Heart left ventricle (tissue), 16 donors: ENCODE measurements at regions of chr2 and their contacts with region 1.

Region 1: DNA sequence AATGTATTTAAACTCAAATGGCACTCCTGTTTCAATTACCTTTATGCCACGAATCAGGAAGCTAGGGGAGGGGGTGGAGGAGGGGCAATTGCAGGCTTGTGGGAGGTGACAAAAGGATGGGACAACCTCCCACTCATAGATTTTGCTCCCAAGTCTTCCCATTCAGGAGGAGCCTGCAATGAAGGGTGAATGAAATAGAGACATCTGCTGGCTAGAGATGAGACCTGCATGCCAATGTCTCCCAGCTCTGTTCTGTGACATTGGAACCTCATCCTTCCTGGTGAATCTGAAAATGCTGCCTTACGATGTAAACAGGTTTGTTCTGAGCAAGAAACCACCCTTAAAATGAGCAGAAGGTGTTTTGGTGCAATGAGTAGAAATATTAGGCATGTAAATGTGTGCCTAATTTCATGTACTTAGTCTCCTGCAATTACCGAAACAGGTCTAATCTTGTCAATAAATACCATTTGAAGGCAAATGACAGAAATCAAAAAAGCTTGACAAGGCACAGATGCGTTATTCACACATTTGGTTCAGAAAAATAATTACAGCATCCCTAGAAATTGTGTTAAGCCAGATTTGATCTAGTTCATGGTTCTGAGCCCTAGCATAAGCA is 2.7 kb upstream of the PID1 start:
- DNase-seq: peak in 3 of 5 donors; percentile 37 to 49 (median 40)
- ATAC-seq: peak; percentile 53 to 85 (median 82)
- H3K4me3 ChIP-seq: peak overlapping the region in 8 of 12 donors; percentile 21 to 45 (median 39)
- H3K27ac ChIP-seq: no peak overlapping the region
- H3K4me1 ChIP-seq: peaks cover 0 to 13% (median 0%) of the 10 kb centered on the region in 12 donors
- H3K27me3 ChIP-seq: peaks cover 0 to 5% (median 0%) of the 10 kb centered on the region in 9 donors
- CTCF ChIP-seq: peak; percentile 58 to 85 (median 72)
- POLR2A ChIP-seq: no peak

Region 2: GRCh38 chr2:227890495-227891079 is 1383.2 kb before region 1 on chr2:
- intact Hi-C with region 1: loop called in 4 of 10 experiments (anchors 2 to 10 kb)
- DNase-seq: no peak
- ATAC-seq: peak in 2 of 4 donors; percentile 66 to 79
- H3K4me3 ChIP-seq: no peak overlapping the region
- H3K27ac ChIP-seq: no peak overlapping the region
- H3K4me1 ChIP-seq: no peaks in the 10 kb centered on the region
- H3K27me3 ChIP-seq: no peaks in the 10 kb centered on the region
- CTCF ChIP-seq: peak; percentile 46 to 75 (median 68)
- POLR2A ChIP-seq: no peak

Region 3: GRCh38 chr2:228613133-228613850 is 660.5 kb before region 1 on chr2:
- intact Hi-C with region 1: no loop called
- DNase-seq: no peak
- ATAC-seq: no peak
- H3K4me3 ChIP-seq: no peak overlapping the region
- H3K27ac ChIP-seq: no peak overlapping the region
- H3K4me1 ChIP-seq: no peaks in the 10 kb centered on the region
- H3K27me3 ChIP-seq: no peaks in the 10 kb centered on the region
- CTCF ChIP-seq: no peak
- POLR2A ChIP-seq: no peak

Region 4: DNA sequence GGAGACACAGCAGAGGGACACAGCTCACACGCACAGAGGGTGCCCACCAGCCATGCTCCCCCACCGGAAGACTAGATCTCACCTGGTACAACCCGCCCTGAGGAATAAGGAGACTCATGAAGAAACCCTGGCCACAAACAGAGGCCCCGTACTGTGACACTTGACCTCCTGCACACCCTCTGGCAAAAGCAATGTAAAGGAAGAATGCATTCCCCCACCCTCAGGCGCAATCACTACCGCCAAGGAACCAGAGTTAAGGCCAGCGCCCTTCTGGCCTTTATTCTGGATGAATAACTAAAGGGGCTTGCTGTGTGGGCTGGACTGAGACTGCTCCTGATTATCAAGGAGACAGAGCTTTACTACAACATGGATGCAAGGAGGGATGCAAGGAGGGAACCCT is 583.1 kb before region 1 on chr2:
- intact Hi-C with region 1: loop called in 4 of 10 experiments (anchors 5 kb)
- DNase-seq: no peak
- ATAC-seq: no peak
- H3K4me3 ChIP-seq: no peak overlapping the region
- H3K27ac ChIP-seq: no peak overlapping the region
- H3K4me1 ChIP-seq: no peaks in the 10 kb centered on the region
- H3K27me3 ChIP-seq: no peaks in the 10 kb centered on the region
- CTCF ChIP-seq: no peak
- POLR2A ChIP-seq: no peak

Region 5: DNA sequence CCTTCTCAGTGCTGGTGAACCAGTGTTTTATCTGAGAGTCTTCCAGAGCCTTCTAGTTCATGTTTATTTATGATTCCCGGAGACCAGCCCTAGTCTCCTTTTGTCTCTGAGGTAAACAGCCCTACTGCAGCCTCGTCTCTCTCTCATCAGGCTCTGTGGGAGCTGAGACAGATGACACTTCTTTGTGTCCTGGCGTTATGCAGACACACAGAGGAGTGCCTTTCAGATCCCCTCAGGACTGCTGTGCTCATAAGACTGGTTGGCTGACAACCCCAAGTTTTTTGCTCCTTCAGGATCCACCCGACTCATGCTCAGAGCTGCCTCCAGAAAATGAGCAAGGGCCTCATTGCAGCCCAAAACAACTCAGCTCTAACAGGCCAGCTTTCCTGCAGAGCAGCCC is 568.5 kb before region 1 on chr2:
- intact Hi-C with region 1: loop called in 4 of 10 experiments (anchors 5 kb)
- DNase-seq: no peak
- ATAC-seq: no peak
- H3K4me3 ChIP-seq: no peak overlapping the region
- H3K27ac ChIP-seq: no peak overlapping the region
- H3K4me1 ChIP-seq: no peaks in the 10 kb centered on the region
- H3K27me3 ChIP-seq: no peaks in the 10 kb centered on the region
- CTCF ChIP-seq: no peak
- POLR2A ChIP-seq: no peak

Region 6: DNA sequence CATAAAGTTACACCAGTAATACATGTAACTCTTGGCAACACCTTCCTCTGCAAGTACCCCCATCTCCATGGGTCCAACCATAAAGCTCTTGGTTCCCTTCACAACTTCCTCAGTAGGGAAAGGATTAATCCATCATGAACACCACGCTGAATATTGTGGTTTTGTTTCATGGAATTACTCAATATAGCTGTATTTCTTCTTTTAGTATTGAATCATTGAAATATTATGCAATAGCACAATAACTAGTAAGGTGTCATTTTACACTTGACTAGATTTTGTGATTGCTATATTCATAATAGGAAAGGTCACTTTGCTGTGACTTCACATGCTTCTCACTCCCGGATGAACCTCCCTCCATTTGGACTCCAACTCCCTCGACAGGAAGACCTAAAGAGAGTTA is 27.0 kb after region 1 on chr2:
- intact Hi-C with region 1: no loop called
- DNase-seq: no peak
- ATAC-seq: peak in 3 of 4 donors; percentile 30 to 66 (median 42)
- H3K4me3 ChIP-seq: no peak overlapping the region
- H3K27ac ChIP-seq: peak overlapping the region in 2 of 12 donors; percentile 22 to 78
- H3K4me1 ChIP-seq: peaks cover 0 to 34% (median 0%) of the 10 kb centered on the region in 12 donors
- H3K27me3 ChIP-seq: no peaks in the 10 kb centered on the region
- CTCF ChIP-seq: no peak
- POLR2A ChIP-seq: no peak

Region 7: DNA sequence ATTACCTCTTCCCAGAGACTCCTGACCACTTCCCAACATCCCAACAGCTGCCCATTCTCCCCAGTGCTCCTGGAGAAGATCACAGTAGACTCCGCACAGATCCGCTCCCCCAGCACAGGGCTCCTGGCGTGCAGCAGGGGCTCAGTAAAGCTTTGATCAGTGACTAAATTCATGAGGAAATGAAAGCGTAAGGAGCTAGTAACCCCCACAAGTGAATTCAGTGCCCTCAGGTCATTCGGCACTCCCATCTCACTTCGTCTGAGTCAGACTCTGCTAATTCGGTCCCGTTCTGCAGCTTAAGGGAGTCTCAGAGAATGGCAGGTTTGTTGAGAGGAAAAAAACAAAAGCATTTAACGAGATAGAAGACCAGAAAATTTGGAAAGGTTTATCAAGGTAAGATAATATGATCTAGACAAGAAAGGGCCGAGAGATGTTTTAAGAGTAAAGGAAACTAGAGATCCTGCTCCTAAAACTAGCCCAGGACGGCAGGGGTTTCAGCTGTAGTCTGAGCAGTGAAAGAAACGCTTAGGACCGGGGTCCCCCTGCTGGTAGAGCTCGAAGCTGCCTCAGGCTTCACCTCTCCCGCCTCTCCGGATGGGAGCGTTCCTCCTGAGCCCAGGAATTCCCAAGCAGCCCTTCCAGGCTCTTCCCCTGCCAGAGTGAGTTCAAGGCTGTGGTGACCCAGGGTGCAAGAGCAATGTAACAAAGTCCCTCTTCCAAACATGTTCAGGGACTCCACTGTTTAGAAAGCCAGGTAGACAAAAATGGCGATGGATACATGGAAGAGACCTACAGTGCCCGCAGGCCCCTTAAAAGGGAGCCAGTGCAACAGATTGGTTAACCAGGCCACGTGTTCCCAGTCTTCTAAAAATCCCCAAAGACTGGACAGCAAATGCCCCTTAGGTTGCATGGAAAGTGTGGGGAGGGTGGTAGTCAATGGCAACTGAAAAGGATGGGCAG is 313.2 kb after region 1 on chr2:
- intact Hi-C with region 1: loop called in 2 of 10 experiments (anchors 10 kb)
- DNase-seq: peak; percentile 73 to 84 (median 75)
- ATAC-seq: peak; percentile 90 to 99 (median 96)
- H3K4me3 ChIP-seq: peak overlapping the region in 8 of 12 donors; percentile 21 to 48 (median 30)
- H3K27ac ChIP-seq: no peak overlapping the region
- H3K4me1 ChIP-seq: peaks cover 0 to 3% (median 0%) of the 10 kb centered on the region in 12 donors
- H3K27me3 ChIP-seq: peaks cover 0 to 5% (median 0%) of the 10 kb centered on the region in 9 donors
- CTCF ChIP-seq: peak; percentile 73 to 93 (median 87)
- POLR2A ChIP-seq: no peak